ENCODE measurements at regions of chr1 and their contacts with region 1.

Region 1: DNA sequence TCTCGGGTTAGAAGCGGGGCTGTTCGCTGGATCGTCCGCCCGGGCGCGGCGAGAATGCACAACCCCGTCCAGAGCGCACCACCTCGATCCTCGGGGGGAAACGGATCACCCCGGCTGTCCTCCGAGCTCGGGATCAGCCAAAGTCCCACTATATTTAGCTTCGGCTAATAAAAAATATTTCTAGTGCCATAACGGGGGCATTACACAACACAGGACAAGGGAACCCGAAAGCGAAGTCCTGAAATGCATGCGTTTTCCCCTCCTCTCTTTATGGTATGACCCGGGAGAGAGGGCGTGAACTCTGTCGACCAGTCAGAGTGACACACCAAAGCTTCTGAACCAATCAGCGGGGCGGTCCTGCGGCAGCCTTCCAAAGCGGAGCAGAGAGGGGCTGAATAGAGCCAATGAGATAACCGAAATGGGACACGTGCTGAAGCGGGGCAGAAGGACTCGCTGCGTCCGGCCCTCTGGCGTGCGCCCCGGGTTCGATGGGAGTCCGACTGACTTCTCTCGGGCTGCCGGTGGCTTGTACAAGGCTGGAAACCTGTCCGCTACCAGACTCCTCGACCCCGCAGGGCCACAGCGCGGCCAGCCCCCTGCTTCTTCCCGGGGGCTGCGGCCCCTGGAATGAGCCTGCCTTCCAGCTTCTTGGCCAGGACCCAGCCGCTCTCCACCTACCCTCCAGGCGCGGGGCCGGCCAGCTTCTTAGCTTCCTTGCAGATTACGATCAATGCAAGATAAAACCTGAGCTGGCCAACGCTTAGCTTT is at the start of gene ALDH4A1:
- DNase-seq: peak; percentile 99
- total RNA-seq, gene ALDH4A1: 50.3 TPM

Region 2: DNA sequence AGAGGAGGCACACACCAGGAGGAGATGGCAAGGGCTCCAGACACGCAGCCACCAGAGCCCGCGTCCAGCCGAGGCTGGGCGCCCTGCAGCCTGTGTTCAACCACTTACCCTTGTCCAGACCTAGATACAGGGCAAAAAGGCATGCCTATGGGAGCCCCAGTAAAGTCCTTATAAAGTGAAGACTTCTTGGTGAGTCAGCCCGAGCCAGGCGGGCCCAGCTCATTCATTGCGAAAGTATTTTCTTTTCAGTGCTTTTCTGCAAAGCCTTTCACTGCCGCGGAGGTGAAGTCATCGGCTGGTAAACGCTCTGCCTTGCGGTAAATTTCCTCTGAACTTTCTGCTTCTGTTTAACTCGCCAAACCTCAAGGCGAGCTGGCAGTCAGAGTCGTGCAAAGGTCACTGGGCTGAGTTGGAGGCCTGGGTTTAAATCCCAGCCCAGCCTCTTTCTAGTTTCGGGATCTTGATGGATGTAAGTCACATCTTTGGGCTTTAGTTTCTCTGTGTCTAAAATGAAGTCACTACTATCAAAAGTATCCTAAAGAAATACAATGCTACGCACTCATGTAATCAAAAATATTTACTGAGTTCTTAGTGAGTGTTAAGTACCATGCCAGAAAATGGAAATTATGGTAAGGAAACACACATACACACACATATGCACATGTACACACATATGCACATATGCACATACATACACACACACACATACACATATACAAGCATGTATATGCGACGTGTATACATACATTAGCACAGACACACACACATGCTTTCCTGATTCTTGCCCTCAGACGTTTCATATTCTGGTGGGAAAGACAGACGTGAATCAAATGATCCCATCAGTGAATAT is 108.5 kb after region 1 on chr1:
- intact Hi-C with region 1: no loop called
- DNase-seq: no peak

Region 3: DNA sequence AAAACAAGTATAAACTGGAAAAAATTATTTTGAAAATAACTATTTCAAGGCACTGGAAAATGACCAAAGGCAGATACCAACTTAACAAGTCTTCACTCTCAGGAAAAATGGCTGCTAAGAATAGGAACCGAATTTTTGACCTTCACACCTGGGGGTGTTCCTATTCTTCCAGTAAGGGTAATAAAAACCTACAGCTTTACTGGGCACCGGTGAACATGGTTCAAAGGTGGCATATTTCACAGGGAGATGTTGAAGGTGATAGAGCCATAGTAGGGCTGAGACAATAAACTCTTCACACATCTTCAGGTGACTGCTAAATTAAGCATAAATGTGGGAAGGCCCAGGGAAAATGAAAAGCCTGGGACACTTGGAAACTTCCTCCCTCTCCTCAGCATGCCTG is 119.1 kb after region 1 on chr1:
- intact Hi-C with region 1: no loop called
- DNase-seq: no peak

Region 4: GRCh38 chr1:19081218-19081893 is 178.6 kb after region 1 on chr1:
- intact Hi-C with region 1: loop called (anchors 5 kb)
- DNase-seq: no peak

Region 5: GRCh38 chr1:19096036-19096833 is 193.5 kb after region 1 on chr1:
- intact Hi-C with region 1: loop called (anchors 5 kb)
- DNase-seq: no peak

Region 6: DNA sequence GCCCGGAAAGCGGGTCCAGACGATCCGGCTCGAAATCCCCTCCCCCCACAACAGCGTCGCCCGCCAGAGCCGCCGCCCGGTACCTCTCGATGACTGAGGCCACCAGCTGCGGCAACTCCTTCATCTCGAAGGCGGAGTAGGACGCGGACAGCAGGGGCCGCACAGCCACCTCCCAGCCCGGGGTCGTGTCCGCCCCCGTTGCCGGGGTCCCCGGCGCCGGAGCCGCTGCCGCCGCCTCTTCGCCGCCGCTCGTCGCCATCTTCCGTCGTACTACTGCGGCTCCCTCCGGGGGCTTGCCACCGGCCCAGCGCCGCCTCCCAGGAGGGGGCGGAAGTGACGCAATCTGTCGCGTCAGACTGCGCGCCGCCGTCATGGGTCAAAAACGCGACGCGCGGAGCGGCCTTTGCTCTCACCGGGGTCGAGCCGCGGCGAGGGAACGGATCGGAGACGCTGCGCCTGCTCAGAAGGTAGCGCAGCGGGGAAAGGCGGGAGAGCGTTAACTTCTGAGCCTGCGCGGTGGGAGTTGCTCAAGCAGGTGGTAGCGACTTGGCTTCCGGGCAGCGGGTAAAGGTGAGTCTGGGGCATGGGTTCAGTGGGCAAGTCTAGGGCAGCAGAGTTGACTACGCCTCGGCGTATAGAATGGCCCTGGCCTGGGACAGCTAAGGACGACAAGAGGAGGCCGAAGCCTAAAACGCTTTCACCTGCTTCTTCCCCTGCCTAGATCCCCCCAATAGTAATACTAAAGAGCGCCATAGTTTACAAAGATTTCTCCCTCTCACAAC is 307.5 kb after region 1 on chr1 and contains the start of gene UBR4:
- intact Hi-C with region 1: loop called (anchors 10 kb)
- DNase-seq: peak; percentile 97
- total RNA-seq, gene UBR4: 95.7 TPM